MCF 10A (cell line): ENCODE measurements at regions of chr12 and their contacts with region 1.

Region 1: DNA sequence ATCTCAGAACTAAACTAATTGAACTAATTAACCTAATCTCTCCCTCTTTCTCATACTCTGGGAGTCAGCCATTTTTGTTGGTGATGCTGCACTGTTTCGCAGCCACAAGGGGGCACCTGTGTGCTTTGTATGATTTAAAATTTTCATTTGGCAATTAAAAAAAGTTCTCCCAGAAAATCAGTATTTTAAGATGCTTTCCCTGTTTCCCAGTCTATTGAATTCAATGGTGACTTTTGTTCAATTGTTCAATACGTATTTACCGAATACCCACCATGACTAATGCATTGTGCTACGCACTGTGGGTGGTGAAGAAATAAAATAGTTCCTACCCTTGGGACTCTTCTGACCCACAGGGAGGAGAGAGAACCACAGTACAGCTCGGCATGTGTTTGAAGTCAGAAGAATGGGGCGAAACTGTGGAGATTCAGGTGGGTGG is 63.7 kb downstream of the ZNF664 start:
- DNase-seq: peak; percentile 50
- H3K4me3 Mint-ChIP-seq: no peak overlapping the region
- H3K27ac Mint-ChIP-seq: no peak overlapping the region
- H3K4me1 Mint-ChIP-seq: no peaks in the 10 kb centered on the region
- H3K27me3 Mint-ChIP-seq: no peaks in the 10 kb centered on the region
- CTCF ChIP-seq: peak; percentile 81

Region 2: GRCh38 chr12:123559468-123559867 is 477.2 kb before region 1 on chr12:
- CTCF ChIA-PET with region 1: no interaction called
- POLR2A ChIA-PET with region 1: no interaction called
- intact Hi-C with region 1: no loop called
- DNase-seq: no peak
- H3K4me3 Mint-ChIP-seq: no peak overlapping the region
- H3K27ac Mint-ChIP-seq: no peak overlapping the region
- H3K4me1 Mint-ChIP-seq: no peaks in the 10 kb centered on the region
- H3K27me3 Mint-ChIP-seq: no peaks in the 10 kb centered on the region
- CTCF ChIP-seq: no peak

Region 3: GRCh38 chr12:123801573-123802178 is 235.0 kb before region 1 on chr12:
- CTCF ChIA-PET with region 1: interaction called, 11 read pairs
- POLR2A ChIA-PET with region 1: no interaction called
- intact Hi-C with region 1: loop called (anchors 2 kb)
- DNase-seq: peak; percentile 50
- H3K4me3 Mint-ChIP-seq: no peak overlapping the region
- H3K27ac Mint-ChIP-seq: no peak overlapping the region
- H3K4me1 Mint-ChIP-seq: peaks cover 5% of the 10 kb centered on the region
- H3K27me3 Mint-ChIP-seq: peaks cover 3% of the 10 kb centered on the region
- CTCF ChIP-seq: peak; percentile 62

Region 4: DNA sequence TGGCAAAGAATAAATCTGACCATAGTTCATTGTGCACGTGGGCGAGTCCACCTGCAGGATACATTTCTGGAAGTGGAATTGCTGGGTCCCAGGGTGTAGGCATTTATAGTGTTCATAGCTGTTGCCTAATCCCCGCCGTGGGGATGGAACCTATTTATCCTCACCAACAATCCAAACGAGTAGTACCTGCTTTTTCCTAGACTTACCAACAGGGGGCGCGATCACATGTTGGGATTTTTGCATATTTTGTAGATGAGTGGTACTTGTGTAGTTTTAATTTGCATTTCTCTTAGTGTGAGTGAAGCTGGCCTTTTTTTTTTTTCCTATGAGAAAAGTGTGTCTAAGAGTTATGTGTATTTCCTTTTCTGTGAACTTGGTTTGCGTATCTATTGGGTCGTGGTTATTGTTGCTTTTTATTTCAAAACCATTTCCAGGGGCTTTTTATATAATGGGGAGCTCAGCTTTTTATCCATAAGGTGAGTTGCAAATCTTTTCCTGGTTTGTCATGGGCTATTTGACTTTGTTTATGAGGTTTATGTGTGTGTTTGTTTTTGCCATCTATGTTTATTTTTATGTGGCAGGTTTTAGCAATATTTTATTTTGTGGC is 131.3 kb before region 1 on chr12:
- CTCF ChIA-PET with region 1: interaction called, 4 read pairs
- POLR2A ChIA-PET with region 1: no interaction called
- intact Hi-C with region 1: loop called (anchors 1 kb)
- DNase-seq: peak; percentile 88
- H3K4me3 Mint-ChIP-seq: no peak overlapping the region
- H3K27ac Mint-ChIP-seq: no peak overlapping the region
- H3K4me1 Mint-ChIP-seq: peaks cover 9% of the 10 kb centered on the region
- H3K27me3 Mint-ChIP-seq: peaks cover 23% of the 10 kb centered on the region
- CTCF ChIP-seq: peak; percentile 77

Region 5: GRCh38 chr12:124321040-124321481 is 284.4 kb after region 1 on chr12:
- CTCF ChIA-PET with region 1: interaction called, 22 read pairs
- POLR2A ChIA-PET with region 1: no interaction called
- intact Hi-C with region 1: loop called (anchors 1 kb)
- DNase-seq: peak; percentile 63
- H3K4me3 Mint-ChIP-seq: no peak overlapping the region
- H3K27ac Mint-ChIP-seq: no peak overlapping the region
- H3K4me1 Mint-ChIP-seq: no peaks in the 10 kb centered on the region
- H3K27me3 Mint-ChIP-seq: peaks cover 13% of the 10 kb centered on the region
- CTCF ChIP-seq: peak; percentile 94

Region 6: DNA sequence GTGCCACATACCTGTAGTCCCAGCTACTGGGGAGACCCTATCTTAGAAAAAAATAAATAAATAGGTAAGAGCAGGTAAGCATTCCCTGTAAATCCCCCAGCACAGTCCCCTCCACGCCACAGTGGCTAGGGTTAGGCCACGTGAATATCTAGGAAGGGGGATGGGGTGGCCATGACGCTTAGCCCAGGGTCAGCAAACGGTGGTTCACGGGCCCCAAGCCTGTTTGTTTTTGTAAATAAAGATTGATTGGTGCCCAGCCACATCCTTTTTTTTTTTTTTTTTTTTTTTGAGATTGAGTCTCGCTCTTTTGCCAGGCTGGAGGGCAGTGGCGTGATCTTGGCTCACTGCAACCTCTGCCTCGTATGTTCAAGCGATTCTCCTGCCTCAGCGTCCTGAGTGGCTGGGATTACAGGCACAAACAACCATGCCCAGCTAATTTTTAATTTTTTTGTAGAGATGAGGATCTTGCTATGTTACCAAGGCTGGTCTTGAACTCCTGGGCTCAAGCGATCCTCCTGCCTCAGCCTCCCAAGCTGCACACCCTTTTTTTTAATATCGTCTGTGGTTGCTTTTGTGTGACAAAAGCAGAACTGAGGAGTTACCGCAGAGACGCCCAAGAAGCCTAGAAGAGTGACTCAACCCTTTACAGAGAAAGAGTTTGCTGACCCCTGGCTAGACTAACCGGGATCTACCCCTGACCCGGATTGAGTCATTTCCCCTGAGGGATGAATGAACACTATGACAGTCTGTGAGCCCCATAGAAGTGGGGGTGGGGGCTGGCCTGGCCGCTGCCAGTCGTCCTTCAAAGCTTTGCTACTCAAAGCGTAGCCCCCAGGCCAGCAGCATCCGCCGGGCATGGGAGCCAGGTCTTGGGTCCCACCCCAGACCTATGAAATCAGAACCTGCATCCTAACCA is 644.4 kb after region 1 on chr12:
- CTCF ChIA-PET with region 1: no interaction called
- POLR2A ChIA-PET with region 1: no interaction called
- intact Hi-C with region 1: loop called (anchors 5 kb)
- DNase-seq: peak; percentile 91
- H3K4me3 Mint-ChIP-seq: no peak overlapping the region
- H3K27ac Mint-ChIP-seq: peak overlapping the region; percentile 18
- H3K4me1 Mint-ChIP-seq: peaks cover 46% of the 10 kb centered on the region
- H3K27me3 Mint-ChIP-seq: no peaks in the 10 kb centered on the region
- CTCF ChIP-seq: peak; percentile 40